ENCODE measurements at regions of chr9 and their contacts with region 1.

Region 1: GRCh38 chr9:126690431-126691350 is 77.0 kb downstream of the LMX1B start:
- DNase-seq: peak; percentile 73 to 84
- H3K4me3 ChIP-seq: no peak overlapping the region
- H3K4me3 Mint-ChIP-seq: no peak overlapping the region
- H3K27ac Mint-ChIP-seq: no peak overlapping the region
- H3K4me1 ChIP-seq: no peaks in the 10 kb centered on the region
- H3K4me1 Mint-ChIP-seq: peaks cover 9% of the 10 kb centered on the region
- H3K27me3 ChIP-seq: no peaks in the 10 kb centered on the region
- H3K27me3 Mint-ChIP-seq: no peaks in the 10 kb centered on the region
- CTCF ChIP-seq: peak; percentile 82 to 90

Region 2: DNA sequence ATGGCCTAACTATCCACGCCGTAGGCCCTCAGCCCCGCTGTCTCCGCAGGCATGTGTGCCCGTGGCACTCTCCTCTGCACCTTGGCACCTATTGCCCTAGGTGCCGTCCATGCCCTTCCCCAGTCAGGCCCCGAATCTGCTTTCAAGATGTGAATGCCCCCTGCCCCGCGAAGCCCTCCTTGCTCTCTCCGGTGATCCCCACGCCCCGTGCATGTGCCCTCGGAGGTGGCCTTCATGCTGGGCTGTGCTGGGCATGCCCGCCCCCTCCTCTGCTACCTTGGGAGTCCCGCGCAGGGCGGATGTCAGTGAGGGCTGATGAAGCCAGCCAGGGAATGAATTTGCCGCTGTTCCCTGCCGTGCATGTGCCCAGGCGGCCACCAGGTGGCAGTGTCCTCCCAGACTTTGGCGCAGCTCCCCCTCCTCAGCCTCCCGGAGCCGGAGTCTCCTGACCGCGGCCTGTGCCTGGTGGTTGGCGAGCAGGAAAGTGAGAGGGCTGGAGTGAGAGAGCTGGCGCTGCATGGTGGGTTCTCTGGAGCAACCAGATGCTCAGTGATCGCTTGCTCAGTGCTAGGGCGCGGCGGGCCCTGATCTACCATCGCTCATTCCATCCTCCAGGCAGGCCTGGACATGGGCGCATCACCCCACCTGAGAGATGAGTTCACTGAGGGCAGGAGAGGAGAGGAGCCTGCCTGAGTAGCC is 189.9 kb before region 1 on chr9:
- CTCF ChIA-PET with region 1: interaction called, 3 read pairs
- POLR2A ChIA-PET with region 1: no interaction called
- intact Hi-C with region 1: loop called (anchors 2 kb)
- DNase-seq: peak; percentile 69 to 76
- H3K4me3 ChIP-seq: no peak overlapping the region
- H3K4me3 Mint-ChIP-seq: no peak overlapping the region
- H3K27ac Mint-ChIP-seq: no peak overlapping the region
- H3K4me1 ChIP-seq: peaks cover 8% of the 10 kb centered on the region
- H3K4me1 Mint-ChIP-seq: no peaks in the 10 kb centered on the region
- H3K27me3 ChIP-seq: no peaks in the 10 kb centered on the region
- H3K27me3 Mint-ChIP-seq: no peaks in the 10 kb centered on the region
- CTCF ChIP-seq: peak; percentile 85 to 93

Region 3: GRCh38 chr9:126611592-126612325 is 78.9 kb before region 1 on chr9:
- CTCF ChIA-PET with region 1: interaction called, 8 read pairs
- POLR2A ChIA-PET with region 1: no interaction called
- intact Hi-C with region 1: loop called (anchors 1 kb)
- DNase-seq: peak; percentile 84 to 92
- H3K4me3 ChIP-seq: peak overlapping the region; percentile 65
- H3K4me3 Mint-ChIP-seq: peak overlapping the region; percentile 75
- H3K27ac Mint-ChIP-seq: no peak overlapping the region
- H3K4me1 ChIP-seq: peaks cover 10% of the 10 kb centered on the region; the same call in 1 of the 2 replicates
- H3K4me1 Mint-ChIP-seq: peaks cover 7% of the 10 kb centered on the region
- H3K27me3 ChIP-seq: no peaks in the 10 kb centered on the region
- H3K27me3 Mint-ChIP-seq: no peaks in the 10 kb centered on the region
- CTCF ChIP-seq: peak; percentile 82 to 88

Region 4: GRCh38 chr9:126630458-126631237 is 60.0 kb before region 1 on chr9:
- CTCF ChIA-PET with region 1: interaction called, 16 read pairs
- POLR2A ChIA-PET with region 1: no interaction called
- intact Hi-C with region 1: no loop called
- DNase-seq: no peak
- H3K4me3 ChIP-seq: no peak overlapping the region
- H3K4me3 Mint-ChIP-seq: no peak overlapping the region
- H3K27ac Mint-ChIP-seq: no peak overlapping the region
- H3K4me1 ChIP-seq: peaks cover 19% of the 10 kb centered on the region
- H3K4me1 Mint-ChIP-seq: peaks cover 12% of the 10 kb centered on the region
- H3K27me3 ChIP-seq: no peaks in the 10 kb centered on the region
- H3K27me3 Mint-ChIP-seq: no peaks in the 10 kb centered on the region
- CTCF ChIP-seq: no peak

Region 5: DNA sequence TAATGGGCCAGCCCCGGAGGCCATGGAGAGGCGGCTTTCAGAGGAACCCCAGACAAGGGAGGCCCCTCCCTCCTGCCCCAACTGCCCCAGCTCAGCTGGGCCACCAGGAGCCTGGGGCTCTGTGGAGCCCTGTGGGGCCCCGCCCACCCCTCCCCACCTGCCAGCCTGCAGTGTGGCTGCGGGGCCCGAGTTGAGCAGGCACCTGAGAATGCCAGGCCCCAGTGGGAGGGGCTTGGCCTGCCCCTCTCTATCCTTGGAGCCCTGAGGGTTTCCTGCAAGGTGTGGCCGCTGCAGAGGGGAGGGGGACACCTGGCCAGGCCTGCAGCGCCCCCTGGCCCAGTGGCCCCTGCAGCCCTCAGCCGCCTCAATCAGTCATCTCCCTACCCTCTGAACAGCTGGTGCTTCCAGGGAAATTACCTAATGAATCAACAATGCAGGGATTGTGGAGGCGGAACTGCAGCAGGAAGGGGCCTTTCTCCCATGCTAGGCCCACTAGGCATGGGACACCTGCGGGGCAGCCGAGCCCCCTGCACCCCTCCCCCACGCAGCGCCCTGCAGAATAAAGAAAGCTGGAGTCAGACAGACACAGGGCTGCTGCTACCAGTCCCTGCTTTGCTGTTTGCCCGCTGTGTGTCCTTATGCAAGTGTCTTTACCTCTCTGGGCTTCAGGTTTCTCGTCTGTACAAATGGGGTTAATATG is 29.0 kb before region 1 on chr9:
- CTCF ChIA-PET with region 1: interaction called, 7 read pairs
- POLR2A ChIA-PET with region 1: no interaction called
- intact Hi-C with region 1: loop called (anchors 2 kb)
- DNase-seq: peak; percentile 74 to 84
- H3K4me3 ChIP-seq: no peak overlapping the region
- H3K4me3 Mint-ChIP-seq: no peak overlapping the region
- H3K27ac Mint-ChIP-seq: peak overlapping the region; percentile 26
- H3K4me1 ChIP-seq: peaks cover 46% of the 10 kb centered on the region
- H3K4me1 Mint-ChIP-seq: peaks cover 13% of the 10 kb centered on the region
- H3K27me3 ChIP-seq: no peaks in the 10 kb centered on the region
- H3K27me3 Mint-ChIP-seq: no peaks in the 10 kb centered on the region
- CTCF ChIP-seq: peak; percentile 39 to 59

Region 6: GRCh38 chr9:126704873-126705766 is 14.4 kb after region 1 on chr9:
- CTCF ChIA-PET with region 1: interaction called, 19 read pairs
- POLR2A ChIA-PET with region 1: no interaction called
- intact Hi-C with region 1: no loop called
- DNase-seq: peak; percentile 84 to 88
- H3K4me3 ChIP-seq: no peak overlapping the region
- H3K4me3 Mint-ChIP-seq: peak overlapping the region; percentile 61
- H3K27ac Mint-ChIP-seq: peak overlapping the region; percentile 34
- H3K4me1 ChIP-seq: peaks cover 26% of the 10 kb centered on the region
- H3K4me1 Mint-ChIP-seq: peaks cover 14% of the 10 kb centered on the region
- H3K27me3 ChIP-seq: no peaks in the 10 kb centered on the region
- H3K27me3 Mint-ChIP-seq: peaks cover 10% of the 10 kb centered on the region
- CTCF ChIP-seq: peak; percentile 82 to 89

Region 7: GRCh38 chr9:126781186-126782052 is 90.7 kb after region 1 on chr9:
- CTCF ChIA-PET with region 1: interaction called, 21 read pairs
- POLR2A ChIA-PET with region 1: no interaction called
- intact Hi-C with region 1: no loop called
- DNase-seq: peak; percentile 86 to 93
- H3K4me3 ChIP-seq: no peak overlapping the region
- H3K4me3 Mint-ChIP-seq: peak overlapping the region; percentile 48
- H3K27ac Mint-ChIP-seq: no peak overlapping the region
- H3K4me1 ChIP-seq: no peaks in the 10 kb centered on the region
- H3K4me1 Mint-ChIP-seq: no peaks in the 10 kb centered on the region
- H3K27me3 ChIP-seq: no peaks in the 10 kb centered on the region
- H3K27me3 Mint-ChIP-seq: no peaks in the 10 kb centered on the region
- CTCF ChIP-seq: peak; percentile 95 to 96